HEK293 (cell line): ENCODE measurements at regions of chr11 and their contacts with region 1.

Region 1: DNA sequence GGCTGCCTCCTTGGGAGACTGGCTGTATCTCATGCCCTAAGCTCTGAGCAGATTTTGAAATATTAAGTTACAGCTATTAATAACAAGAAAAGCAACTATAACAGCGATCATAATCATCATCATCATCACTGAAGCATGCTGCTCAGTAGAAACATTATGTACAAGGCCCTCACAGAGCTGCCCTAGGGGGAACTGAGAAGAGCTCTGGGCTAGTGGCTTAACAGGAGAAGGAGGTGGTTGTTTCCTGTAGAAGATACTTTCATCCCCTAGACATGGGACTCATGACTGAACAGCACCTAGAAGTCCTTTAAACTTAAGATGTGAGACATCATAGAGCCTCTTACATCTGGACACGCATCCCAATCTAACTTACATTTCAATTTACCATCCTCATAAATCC is 332.8 kb upstream of the PLET1 start:
- H3K4me3 ChIP-seq: no peak overlapping the region
- H3K27ac ChIP-seq: no peak overlapping the region
- H3K4me1 ChIP-seq: no peaks in the 10 kb centered on the region
- CTCF ChIP-seq: no peak

Region 2: GRCh38 chr11:112459001-112459400 is 134.4 kb before region 1 on chr11:
- CTCF ChIA-PET with region 1: no interaction called
- POLR2A ChIA-PET with region 1: no interaction called
- H3K4me3 ChIP-seq: no peak overlapping the region
- H3K27ac ChIP-seq: no peak overlapping the region
- H3K4me1 ChIP-seq: no peaks in the 10 kb centered on the region
- CTCF ChIP-seq: no peak

Region 3: DNA sequence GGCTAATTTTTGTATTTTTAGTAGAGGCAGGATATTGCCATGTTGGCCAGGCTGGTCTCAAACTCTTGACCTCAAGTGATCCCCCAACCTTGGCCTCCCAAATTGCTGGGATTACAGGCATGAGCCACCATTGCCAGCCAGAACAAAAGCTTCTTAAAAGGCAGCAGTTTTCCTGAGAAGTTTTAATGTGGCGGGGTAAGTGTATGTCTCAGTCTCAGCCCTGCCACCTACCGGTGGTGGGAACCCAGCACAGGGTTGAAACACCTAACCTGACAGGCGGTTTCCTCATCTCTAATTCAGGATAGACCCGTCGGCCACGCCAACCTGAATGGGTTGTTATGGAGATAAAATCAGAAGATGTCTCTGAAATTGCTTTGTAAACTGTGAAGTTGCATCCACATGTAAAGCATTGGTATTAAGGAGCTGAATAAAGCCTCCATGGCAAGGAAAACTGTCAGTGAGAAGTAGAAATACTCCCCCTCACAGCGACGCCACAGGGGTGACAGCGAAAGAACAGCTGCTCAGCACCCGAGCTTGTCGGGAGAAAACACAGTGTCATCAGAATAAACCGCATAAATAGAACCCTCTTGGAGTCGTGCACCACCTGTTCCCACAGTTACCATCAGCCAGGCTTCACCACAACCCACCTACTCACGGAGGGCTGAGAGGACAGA is 201.8 kb after region 1 on chr11:
- CTCF ChIA-PET with region 1: interaction called, 36 read pairs
- POLR2A ChIA-PET with region 1: no interaction called
- H3K4me3 ChIP-seq: no peak overlapping the region
- H3K27ac ChIP-seq: no peak overlapping the region
- H3K4me1 ChIP-seq: no peaks in the 10 kb centered on the region
- CTCF ChIP-seq: no peak